Prostate gland (tissue), 2 donors: ENCODE measurements at regions of chr2 and their contacts with region 1.

Region 1: GRCh38 chr2:73839652-73840411 is 11.1 kb downstream of the STAMBP start:
- DNase-seq: no peak
- H3K4me3 ChIP-seq: no peak overlapping the region
- H3K27ac ChIP-seq: peak overlapping the region; percentile 55 to 67
- H3K4me1 ChIP-seq: peaks cover 7% of the 10 kb centered on the region
- H3K27me3 ChIP-seq: no peaks in the 10 kb centered on the region
- CTCF ChIP-seq: no peak
- POLR2A ChIP-seq: no peak

Region 2: GRCh38 chr2:73468376-73468775 is 371.5 kb before region 1 on chr2:
- intact Hi-C with region 1: no loop called
- DNase-seq: no peak
- H3K4me3 ChIP-seq: no peak overlapping the region
- H3K27ac ChIP-seq: no peak overlapping the region
- H3K4me1 ChIP-seq: no peaks in the 10 kb centered on the region
- H3K27me3 ChIP-seq: no peaks in the 10 kb centered on the region
- CTCF ChIP-seq: no peak
- POLR2A ChIP-seq: no peak

Region 3: GRCh38 chr2:73870084-73870483 is 30.3 kb after region 1 on chr2:
- intact Hi-C with region 1: loop called (anchors 5 kb)
- DNase-seq: peak; percentile 64
- H3K4me3 ChIP-seq: no peak overlapping the region
- H3K27ac ChIP-seq: peak overlapping the region; percentile 70 to 86
- H3K4me1 ChIP-seq: peaks cover 11% of the 10 kb centered on the region
- H3K27me3 ChIP-seq: no peaks in the 10 kb centered on the region
- CTCF ChIP-seq: no peak
- POLR2A ChIP-seq: no peak

Region 4: DNA sequence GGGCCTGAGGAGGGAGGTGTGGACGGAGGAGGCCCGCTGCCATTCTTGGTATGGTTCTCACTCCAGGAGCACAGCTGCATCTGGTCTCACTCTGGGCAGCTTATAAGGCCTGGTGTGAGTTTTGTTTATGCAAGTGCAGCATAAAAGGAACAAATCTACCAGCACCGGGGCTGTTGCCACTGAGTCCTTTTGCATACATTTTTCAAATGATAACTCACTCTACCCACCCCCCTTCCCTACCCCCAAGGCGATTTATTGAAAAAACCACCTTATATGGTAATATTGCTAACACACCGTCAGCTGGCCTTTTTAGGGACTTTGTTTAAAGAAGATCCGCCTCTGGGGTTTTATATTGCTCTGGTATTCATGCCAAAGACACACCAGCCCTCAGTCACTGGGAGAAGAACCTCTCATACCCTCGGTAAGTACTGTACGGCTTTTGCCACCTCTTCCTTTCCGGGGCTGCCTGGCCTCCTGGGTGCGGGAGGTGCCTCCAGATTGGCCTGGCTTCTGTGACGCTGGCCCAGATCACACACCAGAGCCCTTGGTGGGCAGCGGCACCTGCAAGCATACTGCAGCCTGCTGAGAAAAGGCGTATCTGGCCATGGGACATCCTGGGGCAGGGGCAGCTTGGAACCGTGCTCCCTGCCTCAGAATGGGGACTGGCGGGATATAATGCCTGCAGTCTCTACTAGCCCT is 52.9 kb after region 1 on chr2 and contains the start of gene ACTG2:
- intact Hi-C with region 1: loop called (anchors 5 kb)
- DNase-seq: no peak
- H3K4me3 ChIP-seq: peak within 1 kb of the TSS; percentile 15 to 29
- H3K27ac ChIP-seq: peak within 1 kb of the TSS; percentile 67 to 80
- H3K4me1 ChIP-seq: no peaks in the 10 kb centered on the region
- H3K27me3 ChIP-seq: no peaks in the 10 kb centered on the region
- CTCF ChIP-seq: no peak
- POLR2A ChIP-seq: no peak
- total RNA-seq, gene ACTG2: 1,031 to 1,176 TPM